Spleen (tissue), 13 donors: ENCODE measurements at regions of chr17 and their contacts with region 1.

Region 1: DNA sequence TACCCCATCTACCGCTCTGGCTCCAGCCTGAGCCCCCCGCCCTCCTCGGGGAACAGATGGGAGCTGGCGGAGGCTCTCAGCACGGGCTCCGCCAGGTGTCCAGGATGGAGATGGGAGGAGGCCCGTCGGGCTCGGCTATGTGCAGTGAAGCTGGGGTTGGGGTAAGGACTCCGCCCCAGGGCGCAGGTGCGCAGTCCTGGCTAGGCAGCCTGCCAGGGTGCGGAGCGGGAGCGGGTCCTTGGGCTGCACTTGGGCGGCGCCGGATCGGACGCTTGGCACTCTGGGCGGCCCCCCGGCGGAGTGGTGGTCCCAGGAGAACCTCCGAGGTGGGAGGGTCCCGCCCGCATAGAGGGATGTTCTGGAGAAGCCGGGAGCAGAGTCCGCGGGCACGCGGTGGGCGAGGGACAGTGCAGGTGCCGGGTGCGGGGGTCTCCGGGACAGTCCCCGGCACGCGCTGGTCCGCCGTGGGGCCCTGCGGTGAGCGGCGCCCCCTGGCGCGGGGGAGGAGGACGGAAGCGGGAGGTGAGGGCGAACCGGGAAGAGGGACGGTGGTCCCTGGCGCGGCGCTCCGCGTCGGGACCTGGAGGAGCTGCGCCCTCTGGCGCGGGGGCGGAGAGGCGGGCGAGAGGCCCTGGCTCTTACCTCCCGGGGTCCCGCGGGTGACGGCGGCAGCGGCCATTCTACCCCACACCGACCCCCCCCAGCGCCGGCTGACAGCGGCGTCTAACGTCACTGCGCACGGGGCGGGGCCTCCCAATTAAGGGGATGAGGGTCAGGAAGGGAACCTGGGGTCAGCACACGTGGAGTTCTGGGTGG is at the start of gene CAMTA2:
- DNase-seq: peak; percentile 97
- H3K4me3 ChIP-seq: peak within 1 kb of the TSS; percentile 70 to 98 (median 84)
- H3K27ac ChIP-seq: peak within 1 kb of the TSS; percentile 94 to 99 (median 96)
- H3K4me1 ChIP-seq: peaks cover 14 to 59% (median 34%) of the 10 kb centered on the region in 6 donors
- H3K27me3 ChIP-seq: no peaks in the 10 kb centered on the region
- CTCF ChIP-seq: peak; percentile 60 to 87 (median 78)
- POLR2A ChIP-seq: peak in 2 of 3 donors; percentile 23 to 31
- total RNA-seq, gene CAMTA2: 36.6 to 78.0 (median 51.0) TPM

Region 2: GRCh38 chr17:4908301-4908700 is 78.9 kb before region 1 on chr17:
- intact Hi-C with region 1: loop called (anchors 5 kb)
- DNase-seq: no peak
- H3K4me3 ChIP-seq: no peak overlapping the region
- H3K27ac ChIP-seq: peak overlapping the region in 5 of 8 donors; percentile 23 to 68 (median 43)
- H3K4me1 ChIP-seq: peaks cover 3 to 24% (median 14%) of the 10 kb centered on the region in 6 donors
- H3K27me3 ChIP-seq: peaks cover 0 to 6% (median 0%) of the 10 kb centered on the region in 7 donors
- CTCF ChIP-seq: no peak
- POLR2A ChIP-seq: no peak

Region 3: GRCh38 chr17:5065227-5065744 is 78.1 kb after region 1 on chr17:
- intact Hi-C with region 1: loop called (anchors 10 kb)
- DNase-seq: no peak
- H3K4me3 ChIP-seq: no peak overlapping the region
- H3K27ac ChIP-seq: no peak overlapping the region
- H3K4me1 ChIP-seq: peaks cover 0 to 11% (median 0%) of the 10 kb centered on the region in 6 donors
- H3K27me3 ChIP-seq: peaks cover 0 to 4% (median 0%) of the 10 kb centered on the region in 7 donors
- CTCF ChIP-seq: no peak
- POLR2A ChIP-seq: no peak